PC-9 (cell line): ENCODE measurements at regions of chr19 and their contacts with region 1.

Region 1: GRCh38 chr19:19776041-19777008 is 43.4 kb upstream of the ZNF14 start:
- DNase-seq: peak; percentile 97 to 98
- H3K4me3 ChIP-seq: peak overlapping the region; percentile 88
- H3K27ac ChIP-seq: peak overlapping the region; percentile 30
- H3K4me1 ChIP-seq: peaks cover 16% of the 10 kb centered on the region
- H3K27me3 ChIP-seq: no peaks in the 10 kb centered on the region
- CTCF ChIP-seq: no peak

Region 2: GRCh38 chr19:19531951-19532805 is 244.1 kb before region 1 on chr19:
- CTCF ChIA-PET with region 1: no interaction called
- POLR2A ChIA-PET with region 1: no interaction called
- intact Hi-C with region 1: loop called (anchors 10 kb)
- DNase-seq: peak in 1 of 2 experiments; percentile 74
- H3K4me3 ChIP-seq: no peak overlapping the region
- H3K27ac ChIP-seq: no peak overlapping the region
- H3K4me1 ChIP-seq: no peaks in the 10 kb centered on the region
- H3K27me3 ChIP-seq: no peaks in the 10 kb centered on the region
- CTCF ChIP-seq: peak; percentile 99

Region 3: DNA sequence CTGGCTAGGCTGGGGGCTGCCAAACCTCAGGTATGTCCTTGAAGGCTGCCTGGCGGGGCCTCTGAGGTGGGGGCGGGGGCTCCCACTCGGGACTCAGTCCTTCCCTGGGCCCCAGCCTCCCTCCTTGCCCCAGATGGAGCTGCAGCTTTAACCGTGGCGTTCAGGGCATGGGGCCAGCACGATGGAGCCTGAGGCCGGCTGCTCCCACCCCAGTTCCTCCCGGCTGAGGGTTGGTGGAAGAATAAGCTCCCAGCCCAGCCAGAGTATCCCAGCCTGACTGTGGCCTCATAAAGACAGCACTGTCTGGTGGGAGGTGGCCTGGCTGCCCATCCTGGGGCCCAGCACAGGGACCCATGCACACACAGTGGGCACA is 225.8 kb before region 1 on chr19:
- CTCF ChIA-PET with region 1: no interaction called
- POLR2A ChIA-PET with region 1: no interaction called
- intact Hi-C with region 1: no loop called
- DNase-seq: no peak
- H3K4me3 ChIP-seq: no peak overlapping the region
- H3K27ac ChIP-seq: no peak overlapping the region
- H3K4me1 ChIP-seq: peaks cover 11% of the 10 kb centered on the region
- H3K27me3 ChIP-seq: no peaks in the 10 kb centered on the region
- CTCF ChIP-seq: no peak

Region 4: DNA sequence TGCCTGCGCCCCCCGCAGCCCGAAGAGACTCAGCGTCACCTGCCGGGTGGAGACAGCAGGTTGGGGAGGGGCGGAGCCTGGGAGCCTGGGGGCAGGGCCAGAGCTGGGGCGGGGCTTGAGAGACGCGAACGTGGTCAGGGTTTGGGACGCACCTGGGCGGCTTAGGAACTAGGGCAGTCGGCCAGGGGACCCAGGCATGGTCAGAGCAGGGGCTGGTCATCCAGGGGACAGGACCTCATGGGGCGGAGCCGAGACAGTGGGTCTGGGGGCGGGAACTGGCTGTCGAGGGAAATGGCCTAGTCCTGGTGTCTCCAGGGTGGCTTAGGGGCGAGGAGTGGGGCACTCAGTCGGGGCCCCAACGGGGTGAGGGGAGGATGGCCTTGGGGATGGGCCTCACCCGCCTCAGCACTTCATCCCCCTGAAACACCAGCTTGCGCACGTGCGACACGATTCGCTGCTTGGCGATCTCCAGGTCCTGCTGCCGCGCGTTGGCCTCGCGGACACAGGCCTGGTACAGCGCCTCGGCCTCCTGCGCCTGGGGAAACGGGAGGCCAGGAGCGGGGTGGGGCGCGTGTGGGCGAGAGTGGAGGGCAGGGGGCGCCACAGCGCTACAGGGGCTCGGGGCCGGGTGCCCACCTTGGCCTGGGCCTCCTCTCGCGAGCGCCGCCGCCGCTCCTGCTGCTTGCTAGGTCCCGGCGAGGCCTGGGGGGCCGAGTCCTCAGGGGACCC is 138.6 kb before region 1 on chr19:
- CTCF ChIA-PET with region 1: no interaction called
- POLR2A ChIA-PET with region 1: no interaction called
- intact Hi-C with region 1: no loop called
- DNase-seq: no peak
- H3K4me3 ChIP-seq: no peak overlapping the region
- H3K27ac ChIP-seq: no peak overlapping the region
- H3K4me1 ChIP-seq: no peaks in the 10 kb centered on the region
- H3K27me3 ChIP-seq: no peaks in the 10 kb centered on the region
- CTCF ChIP-seq: no peak

Region 5: GRCh38 chr19:19732579-19733501 is 43.5 kb before region 1 on chr19 and contains the start of gene ZNF14:
- CTCF ChIA-PET with region 1: no interaction called
- POLR2A ChIA-PET with region 1: interaction called, 40 read pairs
- intact Hi-C with region 1: loop called (anchors 1 kb)
- DNase-seq: peak; percentile 90 to 93
- H3K4me3 ChIP-seq: peak within 1 kb of the TSS; percentile 73
- H3K27ac ChIP-seq: no peak within 1 kb of the TSS
- H3K4me1 ChIP-seq: peaks cover 4% of the 10 kb centered on the region
- H3K27me3 ChIP-seq: no peaks in the 10 kb centered on the region
- CTCF ChIP-seq: no peak
- total RNA-seq, gene ZNF14: 2.8 and 3.0 TPM in 2 replicates

Region 6: DNA sequence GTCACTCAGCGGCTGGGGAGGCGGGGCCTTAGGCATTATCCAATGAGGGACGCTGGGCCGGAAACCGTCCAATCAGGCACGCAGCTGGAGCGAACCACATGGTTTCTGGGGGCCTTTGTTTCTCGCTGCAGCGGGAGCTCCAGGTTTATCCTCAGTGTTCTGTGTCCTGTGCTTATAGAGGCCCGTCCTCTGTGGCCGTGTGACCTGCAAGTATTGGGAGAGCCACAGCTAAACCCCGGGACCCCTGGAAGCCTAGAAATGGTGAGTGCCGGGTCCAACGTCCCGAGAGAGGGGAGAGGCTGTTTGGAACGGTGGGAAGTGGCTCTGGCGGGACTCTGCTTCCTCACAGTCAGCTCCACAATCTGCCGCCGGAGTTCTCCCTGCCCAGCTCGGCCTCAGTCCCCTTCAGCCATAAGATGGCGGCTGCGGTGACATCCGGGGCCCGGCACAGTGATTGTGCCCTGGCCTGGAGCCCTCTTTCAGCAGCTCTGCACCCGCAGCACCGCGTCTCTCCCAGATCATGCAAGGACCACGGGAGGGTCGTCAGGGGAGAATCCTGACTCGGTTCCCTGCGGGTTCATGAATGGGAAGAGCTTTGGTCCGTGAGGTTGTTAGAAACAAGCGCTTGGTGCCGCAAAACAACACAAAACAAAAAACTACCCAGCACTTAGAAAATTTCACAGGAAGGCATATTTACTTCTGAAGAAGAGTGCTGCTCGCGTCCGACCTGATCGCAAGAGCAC is 89.6 kb after region 1 on chr19 and contains the start of gene ZNF253:
- CTCF ChIA-PET with region 1: no interaction called
- POLR2A ChIA-PET with region 1: interaction called, 3 read pairs
- intact Hi-C with region 1: loop called (anchors 5 kb)
- DNase-seq: peak; percentile 90
- H3K4me3 ChIP-seq: peak within 1 kb of the TSS; percentile 89
- H3K27ac ChIP-seq: peak within 1 kb of the TSS; percentile 48
- H3K4me1 ChIP-seq: no peaks in the 10 kb centered on the region; the same call in 1 of the 2 replicates
- H3K27me3 ChIP-seq: no peaks in the 10 kb centered on the region
- CTCF ChIP-seq: no peak
- total RNA-seq, gene ZNF253: 4.2 and 5.1 TPM in 2 replicates